CD8-positive, alpha-beta memory T cell (primary cell): ENCODE measurements at regions of chr2 and their contacts with region 1.

Region 1: GRCh38 chr2:7097348-7097895 is 180.2 kb downstream of the RNF144A start:
- DNase-seq: peak; percentile 64 to 78 (median 67)
- H3K4me3 ChIP-seq: peak overlapping the region; percentile 57
- H3K4me3 Mint-ChIP-seq: peak overlapping the region in 6 of 7 donors; percentile 70 to 86 (median 79)
- H3K27ac ChIP-seq: no peak overlapping the region
- H3K27ac Mint-ChIP-seq: peak overlapping the region in 5 of 8 donors; percentile 25 to 56 (median 42)
- H3K4me1 ChIP-seq: peaks cover 9% of the 10 kb centered on the region
- H3K4me1 Mint-ChIP-seq: peaks cover 6 to 9% (median 8%) of the 10 kb centered on the region in 3 donors
- H3K27me3 ChIP-seq: no peaks in the 10 kb centered on the region
- H3K27me3 Mint-ChIP-seq: peaks cover 0 to 2% of the 10 kb centered on the region in 2 donors

Region 2: DNA sequence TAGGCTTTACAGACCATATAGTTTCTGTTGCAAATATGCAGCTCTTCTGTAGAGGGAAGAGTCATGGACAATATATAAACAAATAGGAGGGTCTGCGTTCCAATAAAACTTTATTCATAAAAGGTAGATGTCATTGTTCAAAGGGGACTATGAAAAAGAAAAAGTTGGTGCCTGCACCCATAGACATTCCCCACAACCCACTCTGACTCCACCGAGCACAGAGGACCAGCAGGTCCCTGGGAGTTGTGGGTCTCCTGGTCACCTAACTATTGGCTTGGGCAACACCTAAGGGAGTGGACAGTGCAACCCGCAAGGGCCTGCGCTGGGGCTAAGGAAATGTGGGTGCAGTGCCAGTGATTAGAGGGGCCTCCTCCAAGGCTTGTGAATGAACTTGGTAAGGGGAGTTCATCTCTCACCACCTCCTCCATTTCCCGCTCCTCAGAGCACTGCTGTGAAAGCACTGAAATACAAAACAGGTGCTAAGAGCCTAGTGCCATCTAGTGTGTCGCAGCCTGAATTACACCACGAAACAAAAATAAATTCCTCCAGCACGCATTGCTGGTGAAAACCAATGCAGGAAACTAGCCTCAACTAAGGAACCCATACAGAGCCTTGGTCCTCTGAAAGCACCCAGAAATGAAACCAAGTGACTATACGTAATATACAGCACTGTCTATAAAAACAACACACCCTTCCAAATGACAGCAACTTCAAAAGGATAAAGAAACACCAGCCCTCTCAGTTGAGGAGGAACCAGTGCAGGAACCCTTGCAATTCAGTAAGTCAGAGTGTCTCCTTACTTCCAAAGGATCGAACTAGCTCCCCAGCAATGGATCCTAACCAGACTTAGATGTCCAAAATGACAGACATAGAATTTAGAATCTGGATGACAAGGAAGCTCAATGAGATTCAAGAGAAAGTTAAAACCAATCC is 13.6 kb before region 1 on chr2:
- CTCF ChIA-PET with region 1: interaction called, 16 read pairs
- POLR2A ChIA-PET with region 1: no interaction called
- DNase-seq: peak in 1 of 5 donors; percentile 17
- H3K4me3 ChIP-seq: no peak overlapping the region
- H3K4me3 Mint-ChIP-seq: no peak overlapping the region
- H3K27ac ChIP-seq: no peak overlapping the region
- H3K27ac Mint-ChIP-seq: peak overlapping the region in 2 of 8 donors; percentile 64
- H3K4me1 ChIP-seq: no peaks in the 10 kb centered on the region
- H3K4me1 Mint-ChIP-seq: no peaks in the 10 kb centered on the region
- H3K27me3 ChIP-seq: no peaks in the 10 kb centered on the region
- H3K27me3 Mint-ChIP-seq: peaks cover 0 to 3% of the 10 kb centered on the region in 2 donors

Region 3: DNA sequence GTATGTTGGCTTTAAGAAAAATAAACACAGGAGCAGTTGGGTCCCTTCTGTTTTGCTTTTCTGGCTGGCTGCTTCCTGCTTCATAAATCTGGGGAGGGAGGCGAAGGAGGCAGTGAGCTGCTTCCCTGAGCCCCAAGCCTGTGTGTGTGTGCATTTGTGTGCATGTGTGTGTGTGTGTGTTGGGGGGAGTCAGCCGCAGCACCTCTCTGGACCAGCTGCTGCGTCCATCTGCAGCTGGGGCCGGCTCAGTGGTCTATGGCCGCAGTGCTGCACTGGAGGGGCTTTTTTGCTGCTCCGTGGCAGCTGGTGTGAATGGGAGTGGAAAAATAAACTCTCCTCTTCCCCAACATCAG is 12.1 kb after region 1 on chr2:
- CTCF ChIA-PET with region 1: interaction called, 17 read pairs
- POLR2A ChIA-PET with region 1: no interaction called
- DNase-seq: no peak
- H3K4me3 ChIP-seq: no peak overlapping the region
- H3K4me3 Mint-ChIP-seq: no peak overlapping the region
- H3K27ac ChIP-seq: no peak overlapping the region
- H3K27ac Mint-ChIP-seq: peak overlapping the region in 1 of 8 donors; percentile 92
- H3K4me1 ChIP-seq: no peaks in the 10 kb centered on the region
- H3K4me1 Mint-ChIP-seq: no peaks in the 10 kb centered on the region
- H3K27me3 ChIP-seq: no peaks in the 10 kb centered on the region
- H3K27me3 Mint-ChIP-seq: peaks cover 0 to 3% of the 10 kb centered on the region in 2 donors